ENCODE measurements at regions of chr17 and their contacts with region 1.

Region 1: DNA sequence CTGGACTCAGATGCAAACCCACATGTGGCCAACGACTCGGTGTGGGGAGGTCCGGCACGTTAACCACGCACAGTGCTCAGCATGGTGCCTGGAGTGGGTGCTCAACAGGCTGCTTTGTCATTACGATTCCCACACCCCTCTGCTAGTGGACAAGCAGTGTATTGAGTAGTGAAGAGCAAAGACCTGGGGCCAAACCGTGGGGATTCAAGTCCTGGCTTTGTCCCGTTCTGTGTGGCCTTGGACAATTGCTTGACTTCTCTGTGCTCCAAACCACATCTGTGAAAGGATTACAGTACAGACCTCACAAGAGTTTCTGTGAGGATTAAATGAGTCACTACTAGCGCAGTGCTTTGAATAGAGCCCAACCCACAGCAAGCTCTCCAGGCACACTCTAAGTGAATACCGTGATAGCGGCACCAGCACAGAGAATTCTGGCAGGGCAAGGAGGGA is 33.8 kb downstream of the TRPV2 start:
- DNase-seq: no peak
- H3K4me3 ChIP-seq: no peak overlapping the region
- H3K27me3 ChIP-seq: no peaks in the 10 kb centered on the region
- CTCF ChIP-seq: no peak

Region 2: DNA sequence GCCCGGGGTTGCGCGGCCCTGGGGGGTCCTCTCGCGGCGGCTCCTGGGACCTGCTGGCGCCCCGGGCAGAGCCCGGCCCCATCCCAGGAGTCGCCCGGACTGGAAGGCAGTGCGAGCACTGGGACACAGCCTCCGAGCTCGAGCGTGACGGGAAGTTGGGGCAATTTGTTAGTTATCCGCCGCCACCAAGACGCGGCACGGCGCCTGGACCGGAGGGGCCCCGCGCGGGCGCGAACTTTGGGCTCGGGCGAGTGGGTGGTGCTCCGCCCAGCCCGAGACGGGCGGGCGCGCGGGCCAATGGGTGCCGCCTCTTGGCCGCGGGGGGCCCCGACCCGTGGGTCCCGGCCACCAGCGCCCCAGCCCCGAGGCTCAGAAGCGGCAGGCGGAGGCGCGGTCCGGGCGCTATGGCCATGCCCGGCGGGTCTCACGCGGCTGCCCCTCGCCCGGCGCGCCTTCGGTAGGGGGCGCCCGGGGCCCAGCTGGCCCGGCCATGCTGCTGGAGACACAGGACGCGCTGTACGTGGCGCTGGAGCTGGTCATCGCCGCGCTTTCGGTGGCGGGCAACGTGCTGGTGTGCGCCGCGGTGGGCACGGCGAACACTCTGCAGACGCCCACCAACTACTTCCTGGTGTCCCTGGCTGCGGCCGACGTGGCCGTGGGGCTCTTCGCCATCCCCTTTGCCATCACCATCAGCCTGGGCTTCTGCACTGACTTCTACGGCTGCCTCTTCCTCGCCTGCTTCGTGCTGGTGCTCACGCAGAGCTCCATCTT is 504.2 kb before region 1 on chr17 and contains the start of gene ADORA2B:
- CTCF ChIA-PET with region 1: no interaction called
- POLR2A ChIA-PET with region 1: no interaction called
- DNase-seq: no peak
- H3K4me3 ChIP-seq: peak within 1 kb of the TSS; percentile 67
- H3K27me3 ChIP-seq: no peaks in the 10 kb centered on the region
- CTCF ChIP-seq: peak; percentile 39
- polyA plus RNA-seq, gene ADORA2B: 8.0 and 10.5 TPM in 2 replicates

Region 3: GRCh38 chr17:16380640-16381495 is 68.3 kb before region 1 on chr17 and contains the start of gene UBB:
- CTCF ChIA-PET with region 1: interaction called, 10 read pairs
- POLR2A ChIA-PET with region 1: no interaction called
- DNase-seq: peak; percentile 88
- H3K4me3 ChIP-seq: peak within 1 kb of the TSS; percentile 74
- H3K27me3 ChIP-seq: no peaks in the 10 kb centered on the region
- CTCF ChIP-seq: 0 out of 2 replicates have a peak, but pooled peaks have one; percentile 22
- polyA plus RNA-seq, gene UBB: 3,195 and 3,417 TPM in 2 replicates

Region 4: GRCh38 chr17:16463358-16464302 is 14.5 kb after region 1 on chr17:
- CTCF ChIA-PET with region 1: interaction called, 58 read pairs
- POLR2A ChIA-PET with region 1: no interaction called
- DNase-seq: peak; percentile 51
- H3K4me3 ChIP-seq: no peak overlapping the region
- H3K27me3 ChIP-seq: no peaks in the 10 kb centered on the region
- CTCF ChIP-seq: peak; percentile 57

Region 5: GRCh38 chr17:16496820-16497489 is 47.8 kb after region 1 on chr17:
- CTCF ChIA-PET with region 1: interaction called, 13 read pairs
- POLR2A ChIA-PET with region 1: no interaction called
- DNase-seq: no peak
- H3K4me3 ChIP-seq: no peak overlapping the region
- H3K27me3 ChIP-seq: peaks cover 24% of the 10 kb centered on the region
- CTCF ChIP-seq: no peak

Region 6: GRCh38 chr17:16521070-16521727 is 72.1 kb after region 1 on chr17:
- CTCF ChIA-PET with region 1: interaction called, 264 read pairs
- POLR2A ChIA-PET with region 1: no interaction called
- DNase-seq: peak; percentile 45
- H3K4me3 ChIP-seq: no peak overlapping the region
- H3K27me3 ChIP-seq: peaks cover 5% of the 10 kb centered on the region
- CTCF ChIP-seq: peak; percentile 89